Activated CD4-positive, alpha-beta T cell treated with anti-CD3 and anti-CD28 coated beads for 36 hours (primary cell): ENCODE measurements at regions of chr3 and their contacts with region 1.

Region 1: DNA sequence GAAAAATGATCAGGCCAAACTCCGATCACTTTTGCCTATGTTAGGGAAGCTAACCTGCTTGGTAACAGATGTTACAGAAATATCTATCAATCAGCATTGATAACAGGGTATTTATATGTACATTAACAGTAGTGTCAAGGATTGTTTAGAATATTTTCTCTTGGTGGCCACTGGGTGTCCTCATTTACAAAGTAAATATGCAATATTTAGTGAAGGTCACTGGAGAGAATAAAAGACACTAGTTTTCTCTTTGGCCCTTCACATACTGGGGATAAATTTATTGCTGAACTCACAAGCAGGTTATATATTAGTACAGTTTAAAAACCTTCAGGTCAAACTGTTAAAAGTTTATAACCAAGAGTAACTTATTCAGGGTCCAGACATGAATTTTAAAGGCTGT is 69.0 kb downstream of the TIGIT start:
- DNase-seq: no peak
- ATAC-seq: peak; percentile 49
- H3K4me3 Mint-ChIP-seq: no peak overlapping the region
- H3K27ac Mint-ChIP-seq: no peak overlapping the region
- H3K4me1 Mint-ChIP-seq: peaks cover 5% of the 10 kb centered on the region
- H3K27me3 Mint-ChIP-seq: no peaks in the 10 kb centered on the region

Region 2: DNA sequence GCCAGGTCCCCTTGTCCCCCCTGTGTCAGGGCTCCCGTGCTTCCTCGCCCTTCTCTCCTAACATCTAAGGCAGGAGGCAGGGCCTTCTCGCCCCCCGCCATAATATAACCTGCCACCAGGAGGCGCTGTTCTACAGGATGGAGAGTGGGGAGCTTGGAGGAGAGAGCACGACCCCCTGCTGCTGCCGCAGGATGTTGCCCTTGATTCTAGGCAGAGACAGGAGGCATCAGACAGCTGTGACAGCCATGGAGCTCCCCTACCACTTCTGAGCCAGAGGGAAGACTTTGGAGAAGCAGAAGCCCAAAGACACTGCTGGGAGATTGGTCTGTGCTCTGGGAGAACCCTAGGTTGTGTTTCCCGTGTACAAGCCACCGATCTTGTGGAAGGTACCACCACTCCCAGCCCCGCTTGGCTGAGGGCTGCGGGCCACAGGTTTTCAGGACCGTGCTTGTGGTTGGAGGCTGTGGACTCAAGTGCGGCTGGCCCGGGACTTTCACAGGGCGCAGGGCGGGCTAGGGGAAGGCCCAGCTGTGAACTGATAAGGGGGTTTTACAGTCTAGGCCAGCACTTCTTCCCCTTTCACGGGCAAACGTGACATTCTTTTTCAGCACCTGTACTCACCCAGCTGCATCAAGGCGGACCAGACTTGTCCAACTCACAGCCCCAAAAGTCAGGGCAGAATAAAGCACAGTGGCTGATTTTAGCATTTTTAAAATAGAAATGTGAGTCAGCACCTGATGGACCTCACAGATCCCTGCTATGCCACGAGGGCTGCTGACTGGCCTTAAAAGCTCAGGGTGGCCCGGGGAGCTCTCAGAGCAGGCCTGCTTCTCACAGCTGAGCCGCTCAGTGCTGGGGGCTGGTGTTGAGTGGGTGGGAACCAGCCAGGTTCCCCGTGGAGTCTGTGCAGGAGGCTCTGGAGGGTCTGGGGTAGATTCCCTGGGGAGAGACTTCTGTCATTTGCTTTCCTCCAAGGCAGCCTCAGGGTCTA is 71.6 kb before region 1 on chr3:
- CTCF ChIA-PET with region 1: interaction called, 9 read pairs
- POLR2A ChIA-PET with region 1: no interaction called
- intact Hi-C with region 1: loop called in 1 of 2 experiments (anchors 5 kb)
- DNase-seq: peak; percentile 94
- ATAC-seq: peak; percentile 76
- H3K4me3 Mint-ChIP-seq: peak overlapping the region; percentile 51
- H3K27ac Mint-ChIP-seq: peak overlapping the region; percentile 91
- H3K4me1 Mint-ChIP-seq: peaks cover 34% of the 10 kb centered on the region
- H3K27me3 Mint-ChIP-seq: no peaks in the 10 kb centered on the region

Region 3: DNA sequence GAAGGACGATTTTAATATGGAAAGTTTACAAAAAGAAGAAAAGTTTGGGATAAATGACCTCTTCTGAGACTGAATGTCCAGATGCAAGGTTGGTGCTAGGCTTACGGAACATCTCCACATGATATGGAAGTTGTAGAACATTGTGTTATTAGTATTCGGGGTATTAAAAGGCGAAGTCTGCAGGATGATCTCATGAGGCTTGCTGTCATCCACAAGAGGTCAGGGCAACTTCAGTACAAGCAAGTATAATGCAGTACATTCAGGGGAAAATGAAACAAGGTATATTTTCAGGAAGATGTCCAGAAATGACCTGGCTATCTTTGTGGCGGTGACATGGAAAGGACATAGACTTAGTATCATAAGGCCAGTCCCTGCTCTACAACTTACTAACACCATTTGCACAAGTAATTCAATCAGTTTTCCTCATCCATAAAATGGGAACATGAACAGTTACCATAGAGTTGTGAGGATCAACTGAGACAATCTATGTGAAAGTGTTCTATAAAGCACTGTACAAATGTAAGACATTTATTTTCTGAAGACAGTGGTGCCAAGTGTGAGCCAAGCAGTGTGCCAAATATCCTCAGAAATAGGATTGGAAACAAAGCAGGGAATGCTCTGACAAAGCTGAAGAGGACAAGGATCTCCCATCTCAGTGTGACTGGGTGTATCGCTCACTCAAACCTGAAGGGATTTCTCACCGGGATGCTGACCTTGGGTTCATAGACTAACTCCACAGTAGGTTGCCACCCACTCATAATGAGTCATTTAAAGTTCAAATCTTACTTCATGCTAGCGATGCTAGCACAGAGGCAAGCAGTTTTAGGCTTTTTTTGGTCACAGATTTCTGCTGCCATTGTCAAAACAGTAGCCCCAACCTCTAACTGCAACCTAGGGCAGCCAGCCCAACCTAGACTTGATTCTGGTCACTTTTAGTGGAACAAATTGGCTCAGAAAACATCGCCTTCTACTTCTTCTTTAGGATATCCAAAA is 49.3 kb after region 1 on chr3:
- CTCF ChIA-PET with region 1: no interaction called
- POLR2A ChIA-PET with region 1: no interaction called
- intact Hi-C with region 1: no loop called
- DNase-seq: peak; percentile 59
- ATAC-seq: peak; percentile 95
- H3K4me3 Mint-ChIP-seq: no peak overlapping the region
- H3K27ac Mint-ChIP-seq: peak overlapping the region; percentile 48
- H3K4me1 Mint-ChIP-seq: peaks cover 25% of the 10 kb centered on the region
- H3K27me3 Mint-ChIP-seq: no peaks in the 10 kb centered on the region

Region 4: DNA sequence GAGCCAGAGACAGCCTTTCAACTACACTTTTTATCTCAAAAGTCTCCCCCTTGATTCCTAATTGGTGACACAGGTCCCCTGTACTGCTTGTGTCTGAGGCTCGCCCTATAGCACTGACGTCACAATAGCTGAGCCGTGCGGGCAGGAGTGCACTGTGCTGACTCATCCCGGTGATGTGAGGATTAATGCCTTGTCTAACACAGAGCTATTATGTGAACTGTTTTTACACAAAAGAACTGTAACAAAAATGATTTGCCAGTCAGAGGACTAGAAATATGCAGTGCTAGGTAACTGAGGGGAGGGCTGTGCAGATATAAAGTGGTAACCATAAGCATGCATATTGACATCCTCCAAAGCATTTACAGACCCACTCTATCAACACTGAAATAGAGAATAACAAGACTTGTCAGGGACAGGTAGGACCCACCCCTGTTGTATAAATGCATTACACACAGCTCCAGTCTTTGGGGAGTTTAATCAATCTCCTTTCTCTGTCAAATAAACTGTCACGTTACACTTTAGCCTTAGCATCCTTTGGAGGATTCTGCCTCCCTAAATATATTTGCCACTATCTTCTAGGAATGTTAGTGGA is 136.1 kb after region 1 on chr3:
- CTCF ChIA-PET with region 1: no interaction called
- POLR2A ChIA-PET with region 1: no interaction called
- intact Hi-C with region 1: no loop called
- DNase-seq: no peak
- ATAC-seq: no peak
- H3K4me3 Mint-ChIP-seq: no peak overlapping the region
- H3K27ac Mint-ChIP-seq: no peak overlapping the region
- H3K4me1 Mint-ChIP-seq: peaks cover 33% of the 10 kb centered on the region
- H3K27me3 Mint-ChIP-seq: peaks cover 10% of the 10 kb centered on the region

Region 5: GRCh38 chr3:114756506-114757279 is 393.9 kb after region 1 on chr3:
- CTCF ChIA-PET with region 1: no interaction called
- POLR2A ChIA-PET with region 1: no interaction called
- intact Hi-C with region 1: loop called in 1 of 2 experiments (anchors 5 kb)
- DNase-seq: no peak
- ATAC-seq: no peak
- H3K4me3 Mint-ChIP-seq: no peak overlapping the region
- H3K27ac Mint-ChIP-seq: no peak overlapping the region
- H3K4me1 Mint-ChIP-seq: no peaks in the 10 kb centered on the region
- H3K27me3 Mint-ChIP-seq: no peaks in the 10 kb centered on the region